ENCODE measurements at regions of chr7 and their contacts with region 1.

Region 1: GRCh38 chr7:91034459-91035368 is 229.5 kb upstream of the FZD1 start:
- DNase-seq: no peak
- ATAC-seq: peak; percentile 61
- H3K4me3 Mint-ChIP-seq: no peak overlapping the region
- H3K27ac Mint-ChIP-seq: no peak overlapping the region
- H3K4me1 Mint-ChIP-seq: peaks cover 5% of the 10 kb centered on the region
- H3K27me3 Mint-ChIP-seq: no peaks in the 10 kb centered on the region
- CTCF ChIP-seq: no peak

Region 2: DNA sequence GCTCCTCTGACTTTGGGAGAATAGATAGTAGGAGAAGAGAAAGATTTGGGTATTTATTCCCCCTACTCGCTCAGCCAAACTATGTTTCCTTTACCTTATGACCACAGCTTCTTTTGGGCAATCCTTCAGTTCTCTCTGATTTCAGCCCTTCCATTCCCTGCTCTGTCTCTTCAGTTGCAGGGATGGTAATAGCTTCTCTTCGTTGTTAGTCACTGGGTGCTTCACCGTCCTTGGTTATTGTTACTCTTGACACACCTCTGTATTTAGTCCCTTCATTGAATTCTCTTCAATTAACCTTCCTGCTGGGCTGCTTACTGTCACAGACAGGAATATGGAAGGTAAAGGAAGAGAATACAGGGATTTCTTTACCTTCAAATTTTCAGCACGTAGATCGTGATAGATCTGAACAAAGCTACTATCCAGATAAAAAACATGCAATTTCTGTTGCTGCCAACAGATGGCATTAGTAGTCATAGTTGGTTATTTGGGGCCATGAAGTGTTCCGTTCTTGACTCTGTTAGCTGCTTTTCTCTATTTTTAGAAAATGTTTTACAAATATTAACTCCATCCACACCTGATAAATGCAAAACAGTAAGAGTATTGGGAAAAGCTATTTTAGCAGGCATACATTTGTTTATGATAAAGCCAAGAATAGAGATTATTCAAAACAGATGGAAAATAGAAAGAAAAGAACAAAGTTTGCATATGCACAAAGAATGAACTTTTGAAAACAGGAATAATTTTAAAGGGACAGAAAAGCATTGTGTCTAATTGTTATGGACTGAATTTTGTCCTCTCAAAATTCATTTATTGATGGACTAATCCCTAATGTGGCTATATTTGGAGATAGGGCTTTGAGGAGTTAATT is 579.3 kb before region 1 on chr7:
- CTCF ChIA-PET with region 1: interaction called, 27 read pairs
- POLR2A ChIA-PET with region 1: no interaction called
- intact Hi-C with region 1: loop called (anchors 1 kb)
- DNase-seq: no peak
- ATAC-seq: peak; percentile 73
- H3K4me3 Mint-ChIP-seq: peak overlapping the region; percentile 46
- H3K27ac Mint-ChIP-seq: no peak overlapping the region
- H3K4me1 Mint-ChIP-seq: peaks cover 8% of the 10 kb centered on the region
- H3K27me3 Mint-ChIP-seq: peaks cover 6% of the 10 kb centered on the region
- CTCF ChIP-seq: peak; percentile 64

Region 3: GRCh38 chr7:90552521-90552920 is 482.2 kb before region 1 on chr7:
- CTCF ChIA-PET with region 1: interaction called, 16 read pairs
- POLR2A ChIA-PET with region 1: no interaction called
- intact Hi-C with region 1: loop called (anchors 1 kb)
- DNase-seq: no peak
- ATAC-seq: peak; percentile 34
- H3K4me3 Mint-ChIP-seq: no peak overlapping the region
- H3K27ac Mint-ChIP-seq: no peak overlapping the region
- H3K4me1 Mint-ChIP-seq: peaks cover 3% of the 10 kb centered on the region
- H3K27me3 Mint-ChIP-seq: peaks cover 3% of the 10 kb centered on the region
- CTCF ChIP-seq: no peak

Region 4: GRCh38 chr7:90690159-90690858 is 344.4 kb before region 1 on chr7:
- CTCF ChIA-PET with region 1: interaction called, 18 read pairs
- POLR2A ChIA-PET with region 1: no interaction called
- intact Hi-C with region 1: loop called (anchors 1 kb)
- DNase-seq: no peak
- ATAC-seq: peak; percentile 65
- H3K4me3 Mint-ChIP-seq: no peak overlapping the region
- H3K27ac Mint-ChIP-seq: no peak overlapping the region
- H3K4me1 Mint-ChIP-seq: peaks cover 44% of the 10 kb centered on the region
- H3K27me3 Mint-ChIP-seq: no peaks in the 10 kb centered on the region
- CTCF ChIP-seq: no peak

Region 5: GRCh38 chr7:91050677-91051076 is 16.0 kb after region 1 on chr7:
- CTCF ChIA-PET with region 1: no interaction called
- POLR2A ChIA-PET with region 1: no interaction called
- intact Hi-C with region 1: no loop called
- DNase-seq: no peak
- ATAC-seq: peak; percentile 52
- H3K4me3 Mint-ChIP-seq: peak overlapping the region; percentile 50
- H3K27ac Mint-ChIP-seq: no peak overlapping the region
- H3K4me1 Mint-ChIP-seq: peaks cover 13% of the 10 kb centered on the region
- H3K27me3 Mint-ChIP-seq: no peaks in the 10 kb centered on the region
- CTCF ChIP-seq: no peak

Measured in activated B cell treated with CpG ODN at 0.5 μM for 24 hours (primary cell).